Esophagus squamous epithelium (tissue), 5 donors: ENCODE measurements at regions of chr6 and their contacts with region 1.

Region 1: GRCh38 chr6:8229915-8230756 is 127.8 kb upstream of the EEF1E1 start:
- DNase-seq: no peak
- H3K4me3 ChIP-seq: no peak overlapping the region
- H3K27ac ChIP-seq: no peak overlapping the region
- H3K4me1 ChIP-seq: peaks cover 0 to 11% (median 0%) of the 10 kb centered on the region in 3 donors
- H3K27me3 ChIP-seq: peaks cover 0 to 4% (median 0%) of the 10 kb centered on the region in 4 donors
- CTCF ChIP-seq: no peak
- POLR2A ChIP-seq: no peak

Region 2: DNA sequence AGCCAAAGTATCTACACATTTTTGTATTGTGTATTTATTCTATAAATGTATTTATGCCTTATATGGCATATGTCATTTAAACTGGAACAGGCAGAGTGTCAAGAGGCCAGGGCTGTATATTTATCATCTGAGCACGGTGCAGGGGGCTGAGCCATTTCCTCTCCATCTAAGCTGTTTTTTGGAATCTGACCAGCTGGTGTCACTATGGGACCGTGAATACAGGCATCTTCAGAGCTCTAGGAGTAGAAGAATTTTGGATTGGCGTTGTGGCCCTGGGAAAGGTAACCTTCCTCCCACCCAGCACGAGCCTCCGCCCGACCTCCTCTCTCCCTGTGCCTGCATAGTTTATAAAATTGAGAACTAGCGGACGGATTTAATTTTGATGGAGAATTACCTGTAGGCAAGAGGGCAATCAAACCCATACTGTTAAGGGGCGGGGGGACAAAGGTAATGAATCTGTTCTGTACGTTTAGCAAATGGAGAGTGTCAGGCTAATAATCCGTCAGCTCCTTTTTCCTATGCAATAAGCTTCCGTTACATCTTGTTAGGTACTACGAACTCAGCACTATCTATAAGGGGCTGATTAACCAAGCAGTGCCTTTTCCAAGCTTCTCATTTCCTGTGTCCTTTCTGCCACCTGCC is 98.8 kb before region 1 on chr6:
- intact Hi-C with region 1: loop called (anchors 10 kb)
- DNase-seq: no peak
- H3K4me3 ChIP-seq: no peak overlapping the region
- H3K27ac ChIP-seq: no peak overlapping the region
- H3K4me1 ChIP-seq: no peaks in the 10 kb centered on the region
- H3K27me3 ChIP-seq: peaks cover 0 to 24% (median 0%) of the 10 kb centered on the region in 4 donors
- CTCF ChIP-seq: peak in 5 of 6 experiments; percentile 16 to 53 (median 23)
- POLR2A ChIP-seq: no peak